ENCODE measurements at regions of chr3 and their contacts with region 1.

Region 1: DNA sequence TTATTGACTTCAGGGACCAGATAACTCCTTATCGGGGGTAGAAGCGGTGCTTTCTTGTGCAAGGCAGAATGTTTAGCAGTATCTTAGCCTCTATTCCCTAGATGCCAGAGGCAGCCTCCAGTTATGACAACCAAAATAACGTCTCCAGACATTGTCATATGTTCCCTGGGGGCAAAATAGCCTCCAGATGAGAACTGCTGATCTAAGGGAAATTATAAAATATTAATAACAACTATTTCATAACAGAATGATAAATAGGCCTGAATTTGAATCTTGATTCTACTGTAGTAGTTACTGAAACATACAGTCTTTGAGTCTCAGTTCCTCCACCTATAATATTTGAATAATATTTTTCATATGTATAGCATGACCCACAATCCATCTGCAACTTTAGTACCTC is 1431.3 kb downstream of the ZPLD1 start:
- DNase-seq: no peak
- ATAC-seq: no peak
- H3K4me3 ChIP-seq: no peak overlapping the region
- H3K27ac ChIP-seq: no peak overlapping the region
- H3K4me1 ChIP-seq: no peaks in the 10 kb centered on the region
- H3K27me3 ChIP-seq: no peaks in the 10 kb centered on the region
- CTCF ChIP-seq: no peak
- POLR2A ChIP-seq: no peak

Region 2: GRCh38 chr3:103699228-103699627 is 166.9 kb before region 1 on chr3:
- intact Hi-C with region 1: no loop called
- DNase-seq: no peak
- ATAC-seq: no peak
- H3K4me3 ChIP-seq: no peak overlapping the region
- H3K27ac ChIP-seq: no peak overlapping the region
- H3K4me1 ChIP-seq: no peaks in the 10 kb centered on the region
- H3K27me3 ChIP-seq: no peaks in the 10 kb centered on the region
- CTCF ChIP-seq: no peak
- POLR2A ChIP-seq: no peak

Region 3: DNA sequence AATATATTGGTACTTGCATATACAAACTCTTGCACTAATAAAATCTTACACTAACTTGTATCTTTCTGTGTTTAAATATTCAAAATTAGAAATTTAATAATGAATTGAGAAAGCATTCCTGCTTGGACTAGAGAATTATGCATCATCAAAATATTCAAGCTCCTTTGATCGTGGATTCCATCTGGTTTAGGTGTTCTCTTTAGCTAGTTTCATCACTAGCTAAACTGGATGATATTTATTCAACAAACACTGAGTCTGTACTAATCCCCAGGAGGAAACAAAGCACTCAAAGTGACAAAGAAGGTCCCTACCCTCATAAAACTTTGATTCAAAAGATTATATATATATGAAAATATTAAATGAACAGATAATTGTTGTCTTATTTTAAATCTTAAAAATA is 139.7 kb after region 1 on chr3:
- intact Hi-C with region 1: loop called in 1 of 10 experiments (anchors 5 kb)
- DNase-seq: no peak
- ATAC-seq: no peak
- H3K4me3 ChIP-seq: no peak overlapping the region
- H3K27ac ChIP-seq: no peak overlapping the region
- H3K4me1 ChIP-seq: no peaks in the 10 kb centered on the region
- H3K27me3 ChIP-seq: no peaks in the 10 kb centered on the region
- CTCF ChIP-seq: no peak
- POLR2A ChIP-seq: no peak

Region 4: DNA sequence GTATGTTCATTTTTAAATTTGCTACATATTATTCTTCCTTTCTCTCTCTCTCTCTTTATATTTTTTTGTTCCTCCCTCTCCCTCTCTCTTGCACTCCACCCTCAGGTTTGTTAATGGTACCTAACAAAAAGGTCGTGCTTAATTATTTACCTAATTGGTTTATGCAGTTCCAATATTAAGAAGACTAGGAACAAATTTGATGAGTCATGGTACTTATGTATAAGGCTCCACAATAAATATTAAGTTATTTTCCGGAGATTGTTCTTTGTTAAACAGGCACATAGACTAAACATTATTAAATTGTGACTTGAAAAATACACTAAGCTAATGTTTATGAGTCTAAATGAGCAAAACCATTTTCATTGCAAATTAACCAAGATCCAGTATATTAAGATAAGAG is 299.8 kb after region 1 on chr3:
- intact Hi-C with region 1: no loop called
- DNase-seq: no peak
- ATAC-seq: no peak
- H3K4me3 ChIP-seq: no peak overlapping the region
- H3K27ac ChIP-seq: no peak overlapping the region
- H3K4me1 ChIP-seq: no peaks in the 10 kb centered on the region
- H3K27me3 ChIP-seq: no peaks in the 10 kb centered on the region
- CTCF ChIP-seq: no peak
- POLR2A ChIP-seq: no peak